Panc1 (cell line): ENCODE measurements at regions of chr9 and their contacts with region 1.

Region 1: DNA sequence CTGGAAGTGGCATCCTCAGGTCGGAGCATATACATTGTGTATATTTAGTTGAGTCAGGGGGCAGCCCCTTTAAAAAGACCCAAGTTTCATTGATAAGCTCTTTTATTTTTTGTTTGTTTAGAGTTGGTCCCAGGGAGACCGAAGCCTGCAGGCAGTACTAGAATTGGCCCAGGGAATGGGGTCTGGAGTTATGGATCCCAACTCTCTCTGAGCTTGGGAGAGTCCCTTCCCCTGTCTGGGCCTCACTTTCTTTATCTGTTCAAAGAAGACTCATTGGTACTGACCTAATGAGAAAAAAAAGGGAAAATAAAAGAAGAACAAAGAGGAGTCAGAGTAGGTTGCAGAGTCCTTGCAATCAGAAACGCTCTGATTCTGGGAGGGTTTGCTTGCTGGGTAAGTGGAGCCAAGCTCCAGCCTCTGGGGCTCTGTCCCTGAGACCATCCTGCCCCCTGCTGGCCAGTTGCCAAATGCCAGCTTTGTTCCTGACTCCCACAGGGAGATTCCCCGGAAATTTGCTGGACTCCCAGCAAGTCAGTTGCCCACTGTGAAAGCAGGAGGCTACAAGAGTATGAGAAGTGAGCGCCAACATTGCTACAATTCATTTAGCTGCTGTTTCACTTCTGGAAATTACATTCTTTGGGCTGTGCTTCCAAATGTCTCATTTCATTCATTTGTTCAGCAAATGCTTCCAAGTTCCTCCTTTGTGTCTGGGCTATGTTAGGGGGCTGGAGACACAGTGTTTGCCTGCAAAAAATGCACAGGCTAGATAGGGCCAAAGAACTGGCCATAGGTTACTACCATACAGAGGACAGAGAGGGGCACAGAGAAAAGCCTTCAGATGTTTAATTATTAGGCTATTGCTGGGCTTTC is 156.2 kb downstream of the MELK start:
- DNase-seq: peak; percentile 63
- ATAC-seq: peak; percentile 96
- H3K4me3 ChIP-seq: no peak overlapping the region
- H3K27ac ChIP-seq: no peak overlapping the region
- H3K4me1 ChIP-seq: no peaks in the 10 kb centered on the region
- H3K27me3 ChIP-seq: no peaks in the 10 kb centered on the region; the same call in 1 of the 2 replicates
- CTCF ChIP-seq: no peak

Region 2: DNA sequence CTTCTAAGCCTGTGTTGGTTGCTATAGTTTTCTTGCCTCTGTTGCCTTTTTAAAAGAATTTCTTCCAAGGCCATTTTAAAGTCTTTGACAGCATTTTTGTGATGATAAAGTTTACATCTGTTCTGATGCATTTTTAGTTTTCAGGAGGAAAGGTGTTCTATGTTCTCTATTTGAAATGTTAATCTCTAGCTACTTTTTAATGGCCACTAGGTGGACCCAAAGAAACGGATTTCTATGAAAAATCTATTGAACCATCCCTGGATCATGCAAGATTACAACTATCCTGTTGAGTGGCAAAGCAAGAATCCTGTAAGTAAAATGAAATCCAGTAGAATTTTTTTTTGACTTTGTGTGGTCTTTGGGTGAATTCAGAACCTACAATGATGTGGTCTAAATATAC is 96.0 kb before region 1 on chr9:
- CTCF ChIA-PET with region 1: interaction called, 24 read pairs
- POLR2A ChIA-PET with region 1: no interaction called
- in situ Hi-C with region 1: no loop called
- intact Hi-C with region 1: loop called (anchors 1 kb)
- DNase-seq: no peak
- ATAC-seq: peak; percentile 68; the same call in 1 of the 2 replicates
- H3K4me3 ChIP-seq: no peak overlapping the region
- H3K27ac ChIP-seq: no peak overlapping the region
- H3K4me1 ChIP-seq: no peaks in the 10 kb centered on the region
- H3K27me3 ChIP-seq: no peaks in the 10 kb centered on the region
- CTCF ChIP-seq: no peak

Region 3: GRCh38 chr9:36690412-36691168 is 38.3 kb before region 1 on chr9:
- CTCF ChIA-PET with region 1: interaction called, 13 read pairs
- POLR2A ChIA-PET with region 1: no interaction called
- in situ Hi-C with region 1: no loop called
- intact Hi-C with region 1: no loop called
- DNase-seq: no peak
- ATAC-seq: no peak
- H3K4me3 ChIP-seq: no peak overlapping the region
- H3K27ac ChIP-seq: no peak overlapping the region
- H3K4me1 ChIP-seq: no peaks in the 10 kb centered on the region
- H3K27me3 ChIP-seq: no peaks in the 10 kb centered on the region; the same call in 1 of the 2 replicates
- CTCF ChIP-seq: no peak

Region 4: DNA sequence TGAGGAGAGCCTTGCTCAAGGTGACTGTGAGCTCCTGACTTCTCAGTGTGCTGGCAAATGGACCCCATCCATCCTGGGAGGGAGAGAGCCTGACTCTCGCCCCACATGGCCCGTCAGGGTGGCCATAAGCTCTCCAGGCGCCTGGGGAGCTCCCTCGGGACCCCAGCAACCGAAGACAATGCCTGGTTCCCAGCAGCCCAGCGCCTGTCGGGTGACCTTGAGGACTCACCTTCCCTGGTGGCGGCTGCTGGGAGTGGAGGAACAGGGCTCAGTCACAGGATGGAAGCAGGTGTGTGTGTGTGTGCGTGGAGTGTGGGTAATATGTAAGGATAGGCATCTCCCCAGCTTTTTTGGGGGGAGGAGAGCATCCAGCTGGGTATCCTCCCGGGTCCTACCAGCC is 34.1 kb after region 1 on chr9:
- CTCF ChIA-PET with region 1: no interaction called
- POLR2A ChIA-PET with region 1: interaction called, 11 read pairs
- in situ Hi-C with region 1: no loop called
- intact Hi-C with region 1: no loop called
- DNase-seq: no peak
- ATAC-seq: no peak
- H3K4me3 ChIP-seq: no peak overlapping the region
- H3K27ac ChIP-seq: no peak overlapping the region
- H3K4me1 ChIP-seq: no peaks in the 10 kb centered on the region
- H3K27me3 ChIP-seq: peaks cover 23% of the 10 kb centered on the region
- CTCF ChIP-seq: no peak

Region 5: GRCh38 chr9:36780186-36780585 is 51.3 kb after region 1 on chr9:
- CTCF ChIA-PET with region 1: no interaction called
- POLR2A ChIA-PET with region 1: no interaction called
- in situ Hi-C with region 1: no loop called
- intact Hi-C with region 1: no loop called
- DNase-seq: no peak
- ATAC-seq: no peak
- H3K4me3 ChIP-seq: no peak overlapping the region
- H3K27ac ChIP-seq: no peak overlapping the region
- H3K4me1 ChIP-seq: peaks cover 11% of the 10 kb centered on the region; the same call in 1 of the 2 replicates
- H3K27me3 ChIP-seq: peaks cover 56% of the 10 kb centered on the region
- CTCF ChIP-seq: no peak

Region 6: GRCh38 chr9:36903541-36904435 is 174.9 kb after region 1 on chr9:
- CTCF ChIA-PET with region 1: no interaction called
- POLR2A ChIA-PET with region 1: no interaction called
- in situ Hi-C with region 1: no loop called
- intact Hi-C with region 1: no loop called
- DNase-seq: no peak
- ATAC-seq: peak; percentile 84
- H3K4me3 ChIP-seq: no peak overlapping the region
- H3K27ac ChIP-seq: no peak overlapping the region
- H3K4me1 ChIP-seq: peaks cover 11% of the 10 kb centered on the region
- H3K27me3 ChIP-seq: 0 out of 2 replicates have a peak, but pooled peaks cover 2% of the 10 kb centered on the region
- CTCF ChIP-seq: no peak